ENCODE measurements at regions of chr6 and their contacts with region 1.

Region 1: GRCh38 chr6:121399966-121400365 is 35.5 kb upstream of the GJA1 start:
- DNase-seq: no peak
- ATAC-seq: no peak
- H3K4me3 ChIP-seq: no peak overlapping the region
- H3K27ac ChIP-seq: no peak overlapping the region
- H3K4me1 ChIP-seq: no peaks in the 10 kb centered on the region
- H3K27me3 ChIP-seq: no peaks in the 10 kb centered on the region
- CTCF ChIP-seq: no peak
- POLR2A ChIP-seq: no peak
- RAD21 ChIP-seq: no peak

Region 2: GRCh38 chr6:121344539-121344938 is 55.4 kb before region 1 on chr6:
- CTCF ChIA-PET with region 1: no interaction called
- POLR2A ChIA-PET with region 1: no interaction called
- RAD21 ChIA-PET with region 1: no interaction called
- intact Hi-C with region 1: no loop called
- DNase-seq: no peak
- ATAC-seq: no peak
- H3K4me3 ChIP-seq: no peak overlapping the region
- H3K27ac ChIP-seq: no peak overlapping the region
- H3K4me1 ChIP-seq: no peaks in the 10 kb centered on the region
- H3K27me3 ChIP-seq: no peaks in the 10 kb centered on the region
- CTCF ChIP-seq: no peak
- POLR2A ChIP-seq: no peak
- RAD21 ChIP-seq: no peak

Region 3: DNA sequence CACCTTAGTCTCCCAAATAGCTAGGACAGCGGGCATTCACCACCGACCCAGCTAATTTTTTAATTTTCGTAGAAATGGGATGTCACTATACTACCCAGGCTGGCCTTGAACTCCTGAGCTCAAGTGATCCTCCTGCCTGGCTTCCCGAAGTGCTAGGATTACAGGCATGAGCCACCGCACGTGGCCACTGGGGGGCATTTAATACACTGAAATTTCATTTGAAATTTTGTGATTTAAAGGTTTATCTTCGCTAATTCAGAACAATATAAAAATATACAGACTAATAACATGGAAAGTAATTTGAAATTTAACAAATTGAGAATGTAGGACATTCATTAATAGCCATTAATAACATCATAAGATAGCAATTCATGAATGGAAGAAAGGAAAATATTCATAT is 45.2 kb before region 1 on chr6:
- CTCF ChIA-PET with region 1: interaction called, 10 read pairs
- POLR2A ChIA-PET with region 1: no interaction called
- RAD21 ChIA-PET with region 1: interaction called in 1 of 2 experiments, 3 read pairs
- intact Hi-C with region 1: no loop called
- DNase-seq: no peak
- ATAC-seq: peak; percentile 87
- H3K4me3 ChIP-seq: no peak overlapping the region
- H3K27ac ChIP-seq: no peak overlapping the region
- H3K4me1 ChIP-seq: no peaks in the 10 kb centered on the region
- H3K27me3 ChIP-seq: no peaks in the 10 kb centered on the region
- CTCF ChIP-seq: peak; percentile 19 to 60 (median 53); a peak in 4 of 6 replicates
- POLR2A ChIP-seq: no peak
- RAD21 ChIP-seq: peak; percentile 34

Region 4: DNA sequence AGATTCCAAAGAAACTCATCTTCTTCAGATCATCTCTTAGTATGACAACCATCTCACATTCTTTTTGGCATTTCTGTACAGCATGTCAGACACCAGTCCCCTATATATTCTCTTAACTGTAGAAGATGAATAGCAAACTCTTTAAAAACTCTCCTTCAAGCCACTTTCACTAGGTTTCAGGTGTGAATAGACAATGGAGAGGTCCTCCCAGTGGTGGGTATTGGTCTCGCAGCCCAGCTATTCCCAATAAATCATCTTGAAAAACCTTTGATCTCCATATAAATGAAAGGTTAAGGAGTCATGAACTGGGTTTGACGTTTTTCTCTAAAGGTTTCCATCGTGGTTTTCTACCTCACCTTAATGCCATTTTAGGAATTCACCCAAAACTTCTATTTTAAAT is 215.5 kb after region 1 on chr6:
- CTCF ChIA-PET with region 1: no interaction called
- POLR2A ChIA-PET with region 1: no interaction called
- RAD21 ChIA-PET with region 1: no interaction called
- intact Hi-C with region 1: no loop called
- DNase-seq: peak; percentile 18
- ATAC-seq: peak; percentile 53
- H3K4me3 ChIP-seq: no peak overlapping the region
- H3K27ac ChIP-seq: no peak overlapping the region
- H3K4me1 ChIP-seq: no peaks in the 10 kb centered on the region
- H3K27me3 ChIP-seq: no peaks in the 10 kb centered on the region
- CTCF ChIP-seq: peak in 2 of 3 experiments; percentile 36 to 57; a peak in 4 of 6 replicates
- POLR2A ChIP-seq: no peak
- RAD21 ChIP-seq: peak; percentile 40